ENCODE measurements at regions of chr1 and their contacts with region 1.

Region 1: GRCh38 chr1:244012202-244012601 is 38.9 kb upstream of the ZBTB18 start:
- DNase-seq: no peak
- ATAC-seq: no peak

Region 2: GRCh38 chr1:242723044-242723716 is 1289.0 kb before region 1 on chr1:
- intact Hi-C with region 1: loop called (anchors 5 kb)
- DNase-seq: no peak
- ATAC-seq: no peak

Region 3: GRCh38 chr1:244187310-244187709 is 175.1 kb after region 1 on chr1:
- intact Hi-C with region 1: no loop called
- DNase-seq: no peak
- ATAC-seq: no peak

Measured in sciatic nerve (tissue), 2 donors.